ENCODE measurements at regions of chr16 and their contacts with region 1.

Region 1: GRCh38 chr16:15822957-15823356 is 33.9 kb downstream of the MYH11 start:
- DNase-seq: no peak

Region 2: GRCh38 chr16:15777533-15778203 is 45.3 kb before region 1 on chr16:
- CTCF ChIA-PET with region 1: interaction called, 19 read pairs
- POLR2A ChIA-PET with region 1: no interaction called
- DNase-seq: peak; percentile 62

Region 3: GRCh38 chr16:15811481-15812400 is 11.2 kb before region 1 on chr16:
- CTCF ChIA-PET with region 1: interaction called, 14 read pairs
- POLR2A ChIA-PET with region 1: no interaction called
- DNase-seq: no peak

Region 4: DNA sequence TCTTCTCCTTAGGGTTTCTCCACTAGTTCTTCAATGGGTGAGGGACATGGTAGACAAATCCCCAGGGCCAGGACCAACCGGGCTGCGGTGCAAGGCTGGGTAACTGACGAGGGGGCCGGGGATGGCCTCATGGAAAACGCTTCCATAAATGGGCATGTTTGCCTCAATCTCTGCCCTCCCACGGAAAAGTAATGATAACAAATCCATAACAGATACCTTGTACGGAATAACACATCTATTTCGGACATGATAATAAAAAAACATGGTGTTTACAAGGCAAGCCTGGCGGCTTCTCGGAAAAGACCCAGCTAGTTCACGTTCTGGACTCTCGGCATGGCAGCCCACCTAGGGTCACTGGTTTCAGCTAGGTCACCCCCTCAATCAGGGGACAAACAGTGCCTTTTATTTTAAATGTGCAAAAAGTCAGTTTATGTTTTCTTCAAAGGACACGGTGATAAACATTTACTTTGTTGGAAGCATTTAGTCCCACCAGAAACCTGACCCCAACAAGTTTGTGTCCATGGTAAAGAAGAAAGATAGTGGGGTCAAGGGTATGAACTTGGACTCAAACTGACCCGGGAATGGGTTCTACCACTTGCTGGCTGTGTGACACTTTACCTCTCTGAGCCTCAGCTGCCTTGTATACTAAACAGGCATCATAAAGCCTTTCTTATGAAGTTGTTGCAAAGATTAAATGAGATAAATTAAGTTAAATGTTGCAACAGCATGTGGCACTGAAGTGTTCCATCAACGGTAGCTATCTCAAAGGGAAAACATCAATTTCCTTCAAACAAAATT is 32.1 kb after region 1 on chr16:
- CTCF ChIA-PET with region 1: no interaction called
- POLR2A ChIA-PET with region 1: no interaction called
- DNase-seq: no peak

Region 5: DNA sequence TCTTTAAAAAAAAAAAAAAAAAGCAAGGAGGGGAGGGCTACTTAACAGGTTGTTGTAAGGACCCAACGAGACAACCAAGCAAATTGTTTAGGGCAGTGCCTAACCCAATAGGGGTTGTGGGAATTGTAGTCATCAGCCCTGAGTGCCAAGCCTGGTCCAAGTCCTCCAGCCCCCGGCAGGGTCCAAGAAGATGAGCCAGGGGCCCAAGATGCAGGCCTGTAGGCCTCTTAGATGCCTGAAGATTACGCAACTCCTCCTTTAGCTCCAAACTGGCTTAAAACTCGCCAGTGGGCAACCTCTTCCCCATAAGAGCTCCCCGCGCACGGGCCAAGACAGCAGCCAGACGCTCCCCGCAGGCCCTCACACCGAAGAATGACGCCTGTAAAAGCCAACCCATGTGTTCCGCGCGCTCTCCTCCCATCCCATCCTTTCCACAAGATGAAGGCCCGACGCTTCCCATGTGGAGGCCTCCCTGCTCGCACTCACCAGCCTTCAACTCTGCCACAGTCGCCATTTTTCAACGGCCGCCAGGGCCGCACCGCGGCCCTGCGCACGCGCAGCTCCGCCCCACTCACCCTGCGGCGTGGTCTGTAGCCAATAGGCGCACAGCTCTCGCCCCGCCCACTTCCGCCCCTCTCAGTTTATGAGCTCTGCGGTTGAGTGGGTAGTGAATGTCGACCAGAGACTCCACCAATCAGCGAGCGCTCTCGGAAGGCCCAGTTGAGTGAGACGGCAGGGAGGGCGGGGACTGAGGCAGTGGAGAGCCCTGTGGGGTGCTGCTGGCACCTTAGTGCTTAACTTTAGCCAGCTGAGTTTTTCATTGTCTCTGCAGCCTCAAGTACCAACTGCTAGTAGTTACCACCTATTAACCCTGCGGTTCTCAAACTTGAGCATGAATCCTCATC is 65.4 kb after region 1 on chr16 and contains the start of gene CEP20:
- CTCF ChIA-PET with region 1: no interaction called
- POLR2A ChIA-PET with region 1: no interaction called
- DNase-seq: peak; percentile 100

Measured in HEK293T (cell line).